ENCODE measurements at regions of chr3 and their contacts with region 1.

Region 1: DNA sequence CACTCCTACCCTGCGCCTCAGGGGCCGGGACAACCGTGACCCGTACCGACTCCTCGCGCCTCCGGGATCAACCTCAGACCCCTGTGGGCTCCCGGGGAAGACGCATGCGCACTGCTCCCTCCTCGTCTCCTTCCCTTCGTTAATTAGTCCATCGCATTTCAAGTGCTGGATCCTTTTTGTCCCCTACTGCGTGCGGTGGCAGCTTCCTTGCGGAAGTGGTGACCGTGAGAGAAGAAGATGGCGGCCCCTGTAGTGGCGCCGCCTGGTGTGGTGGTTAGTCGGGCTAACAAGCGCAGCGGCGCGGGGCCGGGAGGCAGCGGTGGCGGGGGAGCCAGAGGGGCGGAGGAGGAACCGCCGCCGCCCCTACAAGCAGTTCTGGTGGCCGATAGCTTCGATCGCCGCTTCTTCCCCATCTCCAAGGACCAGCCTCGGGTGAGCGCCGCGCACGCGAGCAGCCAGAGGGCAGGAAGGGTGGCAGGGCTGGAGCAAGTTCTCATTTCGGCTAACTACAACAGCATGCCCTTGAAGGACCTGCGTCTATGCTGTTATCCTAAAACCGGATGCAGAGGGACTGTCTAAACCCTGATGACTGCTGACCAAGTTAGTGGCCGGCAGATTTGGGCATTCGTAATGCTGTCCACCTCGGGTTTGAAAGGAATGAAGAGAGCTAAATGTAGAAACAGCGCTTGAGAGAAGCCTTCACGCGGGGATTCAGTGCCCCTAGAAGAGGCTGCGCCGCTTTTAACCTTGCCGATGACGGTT is at the start of gene EIF2B5:
- DNase-seq: peak; percentile 90 to 91
- ATAC-seq: peak; percentile 89 to 94
- H3K4me3 ChIP-seq: peak within 1 kb of the TSS; percentile 65 to 97 (median 80)
- H3K27ac ChIP-seq: peak within 1 kb of the TSS; percentile 88 to 97 (median 93)
- H3K4me1 ChIP-seq: peaks cover 15 to 25% of the 10 kb centered on the region in 2 donors
- H3K27me3 ChIP-seq: no peaks in the 10 kb centered on the region
- CTCF ChIP-seq: peak in 4 of 5 experiments; percentile 32 to 55 (median 47)
- POLR2A ChIP-seq: peak; percentile 70 to 72
- total RNA-seq, gene EIF2B5: 42.6 to 56.8 (median 53.4) TPM

Region 2: GRCh38 chr3:183884427-183885296 is 250.7 kb before region 1 on chr3 and contains the start of gene PARL:
- in situ Hi-C with region 1: loop called in 3 of 4 experiments (anchors 25 kb)
- intact Hi-C with region 1: loop called (anchors 5 kb)
- DNase-seq: peak; percentile 93 to 94
- ATAC-seq: peak; percentile 98 to 99
- H3K4me3 ChIP-seq: peak within 1 kb of the TSS; percentile 83 to 96 (median 92)
- H3K27ac ChIP-seq: peak within 1 kb of the TSS; percentile 77 to 90 (median 88)
- H3K4me1 ChIP-seq: peaks cover 20 to 23% of the 10 kb centered on the region in 2 donors
- H3K27me3 ChIP-seq: no peaks in the 10 kb centered on the region
- CTCF ChIP-seq: peak; percentile 93 to 96 (median 96)
- POLR2A ChIP-seq: peak; percentile 43 to 72
- total RNA-seq, gene PARL: 30.5 to 49.5 (median 41.3) TPM

Region 3: GRCh38 chr3:183988216-183988790 is 147.0 kb before region 1 on chr3:
- in situ Hi-C with region 1: no loop called
- intact Hi-C with region 1: no loop called
- DNase-seq: peak in 1 of 2 donors; percentile 45
- ATAC-seq: peak; percentile 38 to 66
- H3K4me3 ChIP-seq: no peak overlapping the region
- H3K27ac ChIP-seq: peak overlapping the region; percentile 75 to 89 (median 84)
- H3K4me1 ChIP-seq: peaks cover 37 to 38% of the 10 kb centered on the region in 2 donors
- H3K27me3 ChIP-seq: no peaks in the 10 kb centered on the region
- CTCF ChIP-seq: no peak
- POLR2A ChIP-seq: no peak

Region 4: DNA sequence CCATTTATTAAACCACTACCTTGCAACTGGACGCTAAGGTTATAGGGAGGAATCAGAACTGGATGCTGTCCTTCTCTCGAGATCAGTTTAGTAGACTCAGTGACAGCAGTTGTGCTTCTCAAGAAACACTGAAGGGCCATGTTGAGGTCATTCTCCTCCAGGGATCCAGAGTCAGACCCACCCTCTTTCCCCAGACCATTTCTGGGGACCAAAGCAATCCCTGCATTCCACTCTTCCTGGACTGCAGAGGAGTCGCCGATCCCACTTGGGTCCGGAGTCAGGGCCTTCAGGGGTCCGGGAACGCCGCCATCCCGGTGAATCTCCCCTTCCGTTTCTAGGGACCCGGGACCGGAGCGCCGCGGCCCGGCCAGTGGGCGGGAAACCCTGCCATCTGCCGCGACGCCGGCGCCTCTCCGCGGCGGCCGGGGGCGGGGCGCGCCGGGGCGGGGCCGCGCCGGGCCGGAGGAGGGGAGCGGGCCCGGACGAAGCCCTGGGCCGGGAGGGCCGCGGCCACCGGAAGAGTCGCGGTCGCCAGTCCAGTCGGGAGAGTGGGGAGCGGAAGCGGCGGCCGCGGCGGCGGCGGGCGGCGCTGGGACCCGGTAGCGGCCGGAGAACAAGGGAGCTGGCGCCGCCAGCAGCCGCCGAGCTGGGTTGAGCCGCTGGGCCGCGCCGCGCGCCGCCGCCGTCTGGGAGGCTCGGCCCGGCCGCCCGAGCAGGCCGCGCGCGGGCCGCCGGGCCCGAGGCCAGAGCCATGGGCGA is 19.7 kb after region 1 on chr3 and contains the start of gene DVL3:
- in situ Hi-C with region 1: no loop called
- intact Hi-C with region 1: loop called (anchors 1 kb)
- DNase-seq: peak; percentile 51 to 71
- ATAC-seq: peak; percentile 84 to 90
- H3K4me3 ChIP-seq: peak within 1 kb of the TSS; percentile 83 to 99 (median 94)
- H3K27ac ChIP-seq: peak within 1 kb of the TSS; percentile 89 to 97 (median 94)
- H3K4me1 ChIP-seq: peaks cover 42 to 53% of the 10 kb centered on the region in 2 donors
- H3K27me3 ChIP-seq: no peaks in the 10 kb centered on the region
- CTCF ChIP-seq: no peak
- POLR2A ChIP-seq: peak; percentile 52 to 78
- total RNA-seq, gene DVL3: 36.5 to 58.1 (median 48.0) TPM

Region 5: GRCh38 chr3:184174646-184175492 is 39.5 kb after region 1 on chr3 and contains the start of gene AP2M1:
- in situ Hi-C with region 1: loop called in 2 of 4 experiments (anchors 10 kb)
- intact Hi-C with region 1: loop called (anchors 2 kb)
- DNase-seq: peak; percentile 98 to 100
- ATAC-seq: peak; percentile 94 to 96
- H3K4me3 ChIP-seq: peak within 1 kb of the TSS; percentile 95 to 98 (median 96)
- H3K27ac ChIP-seq: peak within 1 kb of the TSS; percentile 97 to 99 (median 98)
- H3K4me1 ChIP-seq: peaks cover 29 to 39% of the 10 kb centered on the region in 2 donors
- H3K27me3 ChIP-seq: no peaks in the 10 kb centered on the region
- CTCF ChIP-seq: peak in 1 of 5 experiments; percentile 14
- POLR2A ChIP-seq: peak; percentile 88 to 90
- total RNA-seq, gene AP2M1: 110 to 132 (median 117) TPM

Region 6: GRCh38 chr3:184185461-184186308 is 50.4 kb after region 1 on chr3 and contains the start of gene ABCF3:
- in situ Hi-C with region 1: loop called in 2 of 4 experiments (anchors 10 kb)
- intact Hi-C with region 1: loop called (anchors 1 kb)
- DNase-seq: peak; percentile 99
- ATAC-seq: peak; percentile 92 to 97
- H3K4me3 ChIP-seq: peak within 1 kb of the TSS; percentile 78 to 97 (median 90)
- H3K27ac ChIP-seq: peak within 1 kb of the TSS; percentile 89 to 97 (median 96)
- H3K4me1 ChIP-seq: peaks cover 18 to 21% of the 10 kb centered on the region in 2 donors
- H3K27me3 ChIP-seq: no peaks in the 10 kb centered on the region
- CTCF ChIP-seq: no peak
- POLR2A ChIP-seq: peak; percentile 73 to 91
- total RNA-seq, gene ABCF3: 52.6 to 96.4 (median 63.2) TPM